Calu3 (cell line): ENCODE measurements at regions of chr11 and their contacts with region 1.

Region 1: DNA sequence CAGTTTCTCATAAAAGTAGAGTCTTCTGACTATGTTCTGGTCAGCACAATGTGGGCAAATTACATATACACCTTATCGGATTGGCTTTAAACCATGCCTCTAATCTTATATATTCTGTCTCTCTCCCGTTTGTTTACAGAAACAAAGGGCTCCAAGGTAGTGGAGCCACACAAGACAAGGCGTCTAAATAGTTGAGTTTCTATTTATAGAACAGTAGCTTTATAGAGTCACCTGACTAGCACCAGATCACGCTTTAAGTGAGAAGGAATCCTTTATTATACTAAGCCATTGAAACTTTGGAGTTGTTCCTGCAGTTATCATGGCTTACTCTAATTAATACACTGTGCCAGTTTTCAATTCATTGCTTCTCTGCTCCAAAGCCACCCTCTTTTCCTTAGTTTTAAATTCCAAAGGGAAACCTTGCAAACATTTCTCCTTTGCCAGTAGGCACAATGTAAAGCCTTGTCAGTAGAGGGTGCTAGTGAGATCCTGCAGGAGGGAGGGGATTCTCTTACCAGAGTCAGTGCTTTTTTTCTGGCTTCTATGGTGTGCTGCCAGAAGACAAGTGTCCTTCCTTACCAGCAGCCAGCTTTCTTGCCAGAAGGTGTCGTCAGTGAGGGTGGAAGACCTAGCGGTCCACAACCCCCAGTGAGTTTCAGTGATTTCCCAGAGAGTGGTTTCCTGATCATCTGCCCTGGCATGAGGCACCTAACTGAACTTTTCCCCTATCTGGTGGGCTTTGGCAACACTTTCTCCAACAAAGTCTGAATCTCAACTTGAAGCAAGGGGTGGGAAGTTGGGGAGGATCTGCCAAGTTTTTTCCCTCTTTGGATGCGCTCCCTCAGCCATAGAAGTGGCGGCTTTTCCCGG is 71.7 kb downstream of the RAB38 start:
- DNase-seq: peak; percentile 70
- H3K4me3 Mint-ChIP-seq: peak overlapping the region; percentile 51
- H3K27ac Mint-ChIP-seq: peak overlapping the region; percentile 89
- H3K4me1 Mint-ChIP-seq: peaks cover 41% of the 10 kb centered on the region
- H3K27me3 Mint-ChIP-seq: no peaks in the 10 kb centered on the region
- CTCF ChIP-seq: peak; percentile 70

Region 2: GRCh38 chr11:87878373-87878779 is 225.2 kb before region 1 on chr11:
- CTCF ChIA-PET with region 1: no interaction called
- intact Hi-C with region 1: loop called (anchors 2 kb)
- DNase-seq: peak; percentile 15
- H3K4me3 Mint-ChIP-seq: no peak overlapping the region
- H3K27ac Mint-ChIP-seq: no peak overlapping the region
- H3K4me1 Mint-ChIP-seq: no peaks in the 10 kb centered on the region
- H3K27me3 Mint-ChIP-seq: no peaks in the 10 kb centered on the region
- CTCF ChIP-seq: no peak

Region 3: GRCh38 chr11:88174709-88175568 is 71.4 kb after region 1 on chr11 and contains the start of gene RAB38:
- CTCF ChIA-PET with region 1: interaction called, 5 read pairs
- intact Hi-C with region 1: loop called (anchors 1 kb)
- DNase-seq: peak; percentile 69
- H3K4me3 Mint-ChIP-seq: peak within 1 kb of the TSS; percentile 80
- H3K27ac Mint-ChIP-seq: peak within 1 kb of the TSS; percentile 60
- H3K4me1 Mint-ChIP-seq: peaks cover 13% of the 10 kb centered on the region
- H3K27me3 Mint-ChIP-seq: no peaks in the 10 kb centered on the region
- CTCF ChIP-seq: no peak
- total RNA-seq, gene RAB38: 6.3 and 7.3 TPM in 2 replicates

Region 4: GRCh38 chr11:88281317-88281712 is 177.7 kb after region 1 on chr11:
- CTCF ChIA-PET with region 1: interaction called, 4 read pairs
- intact Hi-C with region 1: loop called (anchors 5 kb)
- DNase-seq: peak; percentile 7
- H3K4me3 Mint-ChIP-seq: no peak overlapping the region
- H3K27ac Mint-ChIP-seq: no peak overlapping the region
- H3K4me1 Mint-ChIP-seq: peaks cover 3% of the 10 kb centered on the region
- H3K27me3 Mint-ChIP-seq: no peaks in the 10 kb centered on the region
- CTCF ChIP-seq: no peak